ENCODE measurements at regions of chr13 and their contacts with region 1.

Region 1: DNA sequence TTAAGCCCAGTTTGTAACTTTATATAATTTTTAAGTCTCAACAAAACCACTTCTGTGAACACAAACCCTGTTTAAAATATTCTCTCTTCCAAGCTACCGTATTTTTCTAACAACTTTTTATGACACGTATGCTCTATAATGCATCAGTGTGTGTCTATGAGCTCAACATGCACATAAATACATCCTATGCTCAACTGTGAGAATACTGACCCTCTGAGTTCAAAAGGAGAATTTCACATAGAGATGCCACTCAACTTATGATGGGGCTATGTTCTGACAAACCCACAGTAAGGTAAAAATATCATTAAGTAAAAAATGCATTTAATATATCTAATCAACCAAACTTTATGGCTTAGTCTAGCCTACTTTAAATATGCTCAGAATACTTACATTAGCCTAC is 1139.7 kb upstream of the SPRY2 start:
- DNase-seq: no peak

Region 2: DNA sequence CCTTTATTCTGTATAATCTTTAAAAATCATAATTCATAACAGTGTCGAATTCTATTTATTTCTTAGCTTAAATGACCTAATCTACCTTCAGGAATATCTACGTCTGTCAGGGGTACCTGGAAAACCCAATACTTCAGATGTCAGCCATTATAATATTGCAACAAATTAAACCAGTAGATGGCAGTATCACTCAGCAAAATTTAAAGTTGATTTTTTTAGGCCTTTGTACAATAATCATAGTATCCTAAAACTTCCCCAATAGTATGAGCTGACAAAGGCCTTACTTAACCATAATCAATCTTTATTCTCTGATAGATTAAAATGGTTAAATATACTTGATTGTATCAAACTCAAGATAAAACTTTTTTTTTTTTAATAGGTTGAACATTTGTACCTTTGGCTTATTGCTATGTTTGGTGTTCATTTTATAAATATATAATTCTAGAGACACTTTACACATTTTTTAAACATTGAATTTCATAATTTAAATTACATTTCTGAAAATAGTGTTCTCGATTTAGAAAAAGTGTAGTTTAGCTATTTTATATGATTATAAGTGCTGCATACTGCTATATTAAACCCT is 309.5 kb before region 1 on chr13:
- intact Hi-C with region 1: loop called (anchors 5 kb)
- DNase-seq: no peak

Measured in posterior cingulate gyrus (tissue), 11 donors.